Calu3 (cell line): ENCODE measurements at regions of chr20 and their contacts with region 1.

Region 1: GRCh38 chr20:45293041-45294002 is 13.3 kb upstream of the RBPJL start:
- DNase-seq: peak; percentile 98
- H3K4me3 Mint-ChIP-seq: peak overlapping the region; percentile 79
- H3K27ac Mint-ChIP-seq: peak overlapping the region; percentile 8
- H3K4me1 Mint-ChIP-seq: peaks cover 17% of the 10 kb centered on the region
- H3K27me3 Mint-ChIP-seq: peaks cover 16% of the 10 kb centered on the region
- CTCF ChIP-seq: peak; percentile 99

Region 2: GRCh38 chr20:45044084-45044573 is 249.2 kb before region 1 on chr20:
- CTCF ChIA-PET with region 1: interaction called, 19 read pairs
- intact Hi-C with region 1: loop called (anchors 1 kb)
- DNase-seq: peak; percentile 67
- H3K4me3 Mint-ChIP-seq: no peak overlapping the region
- H3K27ac Mint-ChIP-seq: peak overlapping the region; percentile 8
- H3K4me1 Mint-ChIP-seq: peaks cover 33% of the 10 kb centered on the region
- H3K27me3 Mint-ChIP-seq: no peaks in the 10 kb centered on the region
- CTCF ChIP-seq: peak; percentile 73

Region 3: GRCh38 chr20:45104786-45105185 is 188.5 kb before region 1 on chr20:
- CTCF ChIA-PET with region 1: interaction called, 24 read pairs
- intact Hi-C with region 1: loop called (anchors 5 kb)
- DNase-seq: peak; percentile 80
- H3K4me3 Mint-ChIP-seq: no peak overlapping the region
- H3K27ac Mint-ChIP-seq: peak overlapping the region; percentile 21
- H3K4me1 Mint-ChIP-seq: peaks cover 48% of the 10 kb centered on the region
- H3K27me3 Mint-ChIP-seq: no peaks in the 10 kb centered on the region
- CTCF ChIP-seq: no peak

Region 4: GRCh38 chr20:45138561-45139300 is 154.6 kb before region 1 on chr20:
- CTCF ChIA-PET with region 1: interaction called, 26 read pairs
- intact Hi-C with region 1: loop called (anchors 1 kb)
- DNase-seq: peak; percentile 90
- H3K4me3 Mint-ChIP-seq: no peak overlapping the region
- H3K27ac Mint-ChIP-seq: no peak overlapping the region
- H3K4me1 Mint-ChIP-seq: no peaks in the 10 kb centered on the region
- H3K27me3 Mint-ChIP-seq: peaks cover 18% of the 10 kb centered on the region
- CTCF ChIP-seq: peak; percentile 99

Region 5: DNA sequence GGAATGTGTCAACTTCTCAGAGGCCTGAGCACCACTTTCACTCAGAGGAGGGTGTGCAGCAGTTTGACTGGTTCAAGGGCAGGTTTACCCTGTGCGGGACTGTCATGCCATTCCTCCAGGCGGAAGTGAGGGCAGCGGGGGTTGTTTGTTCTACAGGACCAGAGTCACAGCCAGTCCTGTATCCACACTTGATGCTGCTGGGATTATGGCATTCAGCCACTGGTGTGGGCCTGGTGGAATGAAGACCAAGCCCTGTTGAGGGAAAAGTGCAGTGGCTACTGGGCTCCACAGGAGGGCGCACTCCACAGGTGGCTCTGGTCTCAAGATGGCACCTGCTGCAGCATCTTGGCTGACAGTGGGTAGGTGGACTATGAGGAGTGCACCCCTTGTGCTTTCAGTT is 57.3 kb before region 1 on chr20:
- CTCF ChIA-PET with region 1: interaction called, 6 read pairs
- intact Hi-C with region 1: loop called (anchors 2 kb)
- DNase-seq: peak; percentile 70
- H3K4me3 Mint-ChIP-seq: no peak overlapping the region
- H3K27ac Mint-ChIP-seq: no peak overlapping the region
- H3K4me1 Mint-ChIP-seq: no peaks in the 10 kb centered on the region
- H3K27me3 Mint-ChIP-seq: peaks cover 52% of the 10 kb centered on the region
- CTCF ChIP-seq: peak; percentile 90

Region 6: GRCh38 chr20:45305262-45305661 is 11.9 kb after region 1 on chr20:
- CTCF ChIA-PET with region 1: interaction called, 11 read pairs
- intact Hi-C with region 1: no loop called
- DNase-seq: no peak
- H3K4me3 Mint-ChIP-seq: no peak overlapping the region
- H3K27ac Mint-ChIP-seq: no peak overlapping the region
- H3K4me1 Mint-ChIP-seq: no peaks in the 10 kb centered on the region
- H3K27me3 Mint-ChIP-seq: peaks cover 68% of the 10 kb centered on the region
- CTCF ChIP-seq: peak; percentile 31